ENCODE measurements at regions of chr4 and their contacts with region 1.

Region 1: DNA sequence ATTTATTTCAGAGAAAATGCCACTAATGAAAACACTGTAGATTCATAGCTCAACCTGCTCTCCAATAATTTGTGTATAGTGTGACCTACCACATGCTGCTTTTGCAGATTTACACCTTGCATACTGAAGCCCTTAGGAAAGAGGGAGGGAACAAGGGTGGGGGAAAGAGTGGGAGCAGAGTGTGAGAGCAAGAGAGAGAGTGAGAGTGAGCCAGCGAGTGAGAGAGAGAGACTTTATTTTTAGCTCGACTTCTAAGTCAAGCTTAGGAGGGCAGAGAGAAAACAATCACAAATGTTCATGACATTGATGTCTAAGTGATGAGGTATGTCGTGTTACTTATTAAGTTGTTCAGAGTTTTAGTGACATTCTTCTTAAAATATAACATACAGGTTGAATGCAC is 112.5 kb upstream of the HAND2 start:
- DNase-seq: no peak
- ATAC-seq: peak; percentile 76 to 87
- H3K4me3 ChIP-seq: no peak overlapping the region
- H3K27ac ChIP-seq: peak overlapping the region; percentile 23
- H3K4me1 ChIP-seq: no peaks in the 10 kb centered on the region
- H3K27me3 ChIP-seq: no peaks in the 10 kb centered on the region

Region 2: GRCh38 chr4:173735049-173735448 is 92.5 kb after region 1 on chr4:
- intact Hi-C with region 1: no loop called
- DNase-seq: no peak
- ATAC-seq: no peak
- H3K4me3 ChIP-seq: no peak overlapping the region
- H3K27ac ChIP-seq: no peak overlapping the region
- H3K4me1 ChIP-seq: no peaks in the 10 kb centered on the region
- H3K27me3 ChIP-seq: no peaks in the 10 kb centered on the region

Region 3: DNA sequence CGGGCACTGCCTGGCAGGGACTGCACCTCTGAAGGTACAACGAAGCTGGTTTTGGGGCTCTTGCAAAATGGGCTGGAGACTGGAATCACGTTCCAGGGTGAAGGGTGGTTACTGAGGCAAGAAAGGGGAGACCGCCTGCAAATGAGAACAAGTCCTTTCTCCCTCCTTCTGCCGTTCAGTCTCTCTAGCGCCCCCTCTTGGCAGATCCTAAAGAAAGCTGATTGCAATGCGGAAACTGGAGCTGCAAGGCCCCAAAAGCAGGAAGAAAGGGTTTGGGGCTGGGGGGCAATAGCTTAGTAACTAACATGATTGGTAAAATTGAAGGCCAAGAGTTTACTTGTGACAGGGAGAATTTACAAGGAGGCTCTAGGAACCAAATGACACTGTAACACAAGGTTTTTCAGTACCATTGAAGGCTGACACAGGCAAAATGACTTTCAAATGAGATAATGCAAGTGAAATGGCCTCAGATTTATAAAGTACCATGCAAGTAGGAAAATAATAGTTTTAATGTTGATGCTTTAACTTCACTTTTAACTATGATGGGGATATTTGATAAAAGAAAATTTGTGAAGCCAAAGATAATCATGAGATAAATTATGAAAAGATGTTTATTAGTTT is 110.2 kb after region 1 on chr4:
- intact Hi-C with region 1: loop called in 1 of 4 experiments (anchors 10 kb)
- DNase-seq: no peak
- ATAC-seq: no peak
- H3K4me3 ChIP-seq: no peak overlapping the region
- H3K27ac ChIP-seq: no peak overlapping the region
- H3K4me1 ChIP-seq: peaks cover 2% of the 10 kb centered on the region
- H3K27me3 ChIP-seq: no peaks in the 10 kb centered on the region

Measured in right cardiac atrium (tissue), 5 donors.